ENCODE measurements at regions of chr11 and their contacts with region 1.

Region 1: GRCh38 chr11:25456211-25456610 is 875.7 kb upstream of the ANO3 start:
- DNase-seq: no peak
- ATAC-seq: no peak
- H3K4me3 ChIP-seq: no peak overlapping the region
- H3K27ac ChIP-seq: no peak overlapping the region
- H3K4me1 ChIP-seq: no peaks in the 10 kb centered on the region
- H3K27me3 ChIP-seq: no peaks in the 10 kb centered on the region
- CTCF ChIP-seq: no peak
- POLR2A ChIP-seq: no peak

Region 2: DNA sequence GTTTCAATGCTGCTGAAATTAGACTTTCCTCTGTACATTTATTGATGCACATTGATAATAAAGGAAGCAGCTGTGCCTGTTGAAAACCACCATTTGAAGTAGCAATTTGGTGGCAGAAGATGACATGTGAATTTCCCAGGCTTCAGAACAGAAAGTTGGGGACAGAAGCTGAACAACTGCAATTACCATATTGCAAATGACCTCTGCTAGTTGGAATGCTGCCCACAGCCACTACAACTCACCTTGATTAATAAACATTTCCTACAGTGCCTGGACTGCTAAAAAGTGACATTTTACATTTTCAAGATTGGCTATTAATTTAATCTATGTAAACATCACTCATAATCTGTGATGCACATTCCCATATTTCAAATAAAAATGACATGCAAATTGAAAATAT is 750.7 kb before region 1 on chr11:
- intact Hi-C with region 1: loop called in 1 of 10 experiments (anchors 10 kb)
- DNase-seq: no peak
- ATAC-seq: no peak
- H3K4me3 ChIP-seq: no peak overlapping the region
- H3K27ac ChIP-seq: no peak overlapping the region
- H3K4me1 ChIP-seq: no peaks in the 10 kb centered on the region
- H3K27me3 ChIP-seq: no peaks in the 10 kb centered on the region
- CTCF ChIP-seq: no peak
- POLR2A ChIP-seq: no peak

Region 3: GRCh38 chr11:25566298-25567200 is 110.3 kb after region 1 on chr11:
- intact Hi-C with region 1: no loop called
- DNase-seq: peak in 4 of 5 donors; percentile 6 to 44 (median 27)
- ATAC-seq: peak; percentile 54 to 82 (median 68)
- H3K4me3 ChIP-seq: no peak overlapping the region
- H3K27ac ChIP-seq: no peak overlapping the region
- H3K4me1 ChIP-seq: peaks cover 0 to 7% (median 0%) of the 10 kb centered on the region in 12 donors
- H3K27me3 ChIP-seq: no peaks in the 10 kb centered on the region
- CTCF ChIP-seq: no peak
- POLR2A ChIP-seq: no peak